Activated T-helper 1 cell treated with anti-CD3 and anti-CD28 coated beads, Interleukin-12 subunit alpha, Interleukin-12 subunit beta, Interleukin-2, Interleukin-4 antibody, amounts not matched to agents 30 ng/mL and 10 ng/mL and 1 ng/mL, durations not matched to agents 14 hours and 24 hours and 36 hours (primary cell): ENCODE measurements at regions of chr9 and their contacts with region 1.

Region 1: DNA sequence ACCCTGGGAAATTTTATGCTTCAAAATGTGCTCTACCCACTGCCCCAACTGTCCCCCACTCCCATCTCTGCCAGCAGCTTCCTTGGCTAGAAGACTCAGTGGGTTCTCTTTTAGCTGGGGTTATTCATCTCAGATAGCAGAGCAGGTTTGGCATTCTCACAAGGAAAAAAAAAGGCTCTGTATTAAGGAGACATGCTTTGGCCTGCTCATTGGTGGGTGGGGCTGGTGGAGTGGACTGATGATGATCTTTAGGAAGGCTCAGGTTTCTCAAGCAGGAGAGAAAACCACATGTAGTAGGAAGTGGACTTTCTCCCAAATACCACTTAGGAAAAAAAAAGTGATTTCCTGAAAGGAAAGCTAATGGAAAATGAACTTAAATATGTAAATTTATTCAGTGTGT is 279.2 kb upstream of the ZNF462 start:
- DNase-seq: no peak
- H3K4me3 Mint-ChIP-seq: no peak overlapping the region
- H3K27ac Mint-ChIP-seq: no peak overlapping the region
- H3K4me1 Mint-ChIP-seq: no peaks in the 10 kb centered on the region
- H3K27me3 Mint-ChIP-seq: no peaks in the 10 kb centered on the region

Region 2: DNA sequence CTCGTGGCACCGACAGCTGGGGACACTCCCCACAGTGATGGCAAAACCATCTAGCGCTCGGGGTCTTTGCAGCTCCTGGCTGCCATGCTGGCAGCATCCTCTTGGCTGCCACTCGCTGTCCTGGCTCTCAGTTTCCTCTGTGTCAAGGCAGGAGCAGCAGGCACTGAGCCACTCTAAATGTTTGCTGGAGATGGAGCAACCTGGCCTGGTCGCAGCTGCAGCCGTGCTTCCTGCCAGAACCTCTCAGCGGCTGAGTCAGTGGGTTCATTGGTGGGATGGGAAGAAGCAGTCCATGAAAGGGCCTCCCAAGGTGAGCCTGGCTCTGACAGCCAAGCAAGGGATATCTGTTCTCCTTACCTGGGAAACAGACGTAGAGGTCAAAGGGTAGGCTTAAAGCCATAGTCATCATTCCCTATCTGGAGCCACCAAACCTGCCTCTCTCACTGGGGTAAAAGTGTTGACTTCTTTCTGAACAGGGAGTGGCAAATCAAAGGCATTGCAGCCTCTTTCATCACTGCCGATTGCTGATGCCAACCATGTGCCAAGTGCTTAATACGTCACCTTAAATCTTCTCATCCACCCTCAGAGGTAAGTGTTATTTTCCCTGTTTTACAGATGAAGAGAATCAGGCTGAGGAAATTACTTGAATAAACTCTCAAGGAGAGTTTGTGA is 25.6 kb before region 1 on chr9:
- intact Hi-C with region 1: loop called (anchors 1 kb)
- DNase-seq: no peak
- H3K4me3 Mint-ChIP-seq: no peak overlapping the region
- H3K27ac Mint-ChIP-seq: no peak overlapping the region
- H3K4me1 Mint-ChIP-seq: no peaks in the 10 kb centered on the region
- H3K27me3 Mint-ChIP-seq: no peaks in the 10 kb centered on the region

Region 3: DNA sequence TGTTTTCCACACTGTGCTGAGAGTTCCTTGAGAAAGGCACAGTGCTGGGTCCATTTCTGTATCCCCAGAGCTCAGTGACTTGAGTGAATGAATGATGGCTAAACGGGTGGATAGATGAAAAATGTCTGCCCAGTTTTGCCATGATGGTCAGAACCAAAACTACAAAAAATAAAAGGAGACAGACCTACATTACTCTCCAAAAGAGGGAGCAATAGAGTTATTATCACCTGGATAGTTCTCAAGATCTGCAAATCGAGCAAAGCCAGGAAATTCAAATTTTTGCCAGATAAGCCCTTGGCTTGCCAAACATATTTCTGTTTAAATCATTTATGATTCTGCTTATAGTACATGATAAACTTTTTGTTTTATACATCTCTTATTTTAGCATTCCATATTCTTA is 65.0 kb after region 1 on chr9:
- intact Hi-C with region 1: no loop called
- DNase-seq: no peak
- H3K4me3 Mint-ChIP-seq: no peak overlapping the region
- H3K27ac Mint-ChIP-seq: no peak overlapping the region
- H3K4me1 Mint-ChIP-seq: no peaks in the 10 kb centered on the region
- H3K27me3 Mint-ChIP-seq: no peaks in the 10 kb centered on the region